ENCODE measurements at regions of chr4 and their contacts with region 1.

Region 1: DNA sequence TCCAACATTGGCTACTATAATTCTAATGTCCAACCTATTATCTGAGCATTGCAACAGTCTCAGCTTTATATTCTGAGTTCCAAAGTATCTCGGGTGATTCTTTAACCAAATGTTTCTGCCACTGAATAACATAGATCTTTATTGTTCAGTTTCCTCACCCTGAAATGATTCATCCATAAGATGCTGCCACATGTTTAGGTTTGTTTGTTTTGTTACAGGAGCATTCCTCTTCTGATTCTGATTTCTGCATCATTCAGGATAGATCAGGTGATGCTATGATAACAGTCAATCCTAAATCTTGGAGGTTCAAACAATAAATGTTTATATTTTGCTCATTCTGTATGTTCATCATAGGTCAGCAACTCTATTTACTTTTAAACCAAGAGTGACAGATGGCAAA is 927.6 kb downstream of the PCDH7 start:
- DNase-seq: no peak
- H3K4me3 ChIP-seq: no peak overlapping the region
- H3K27ac ChIP-seq: no peak overlapping the region
- H3K4me1 ChIP-seq: no peaks in the 10 kb centered on the region
- H3K27me3 ChIP-seq: no peaks in the 10 kb centered on the region
- CTCF ChIP-seq: no peak
- EP300 ChIP-seq: no peak
- POLR2A ChIP-seq: no peak

Region 2: DNA sequence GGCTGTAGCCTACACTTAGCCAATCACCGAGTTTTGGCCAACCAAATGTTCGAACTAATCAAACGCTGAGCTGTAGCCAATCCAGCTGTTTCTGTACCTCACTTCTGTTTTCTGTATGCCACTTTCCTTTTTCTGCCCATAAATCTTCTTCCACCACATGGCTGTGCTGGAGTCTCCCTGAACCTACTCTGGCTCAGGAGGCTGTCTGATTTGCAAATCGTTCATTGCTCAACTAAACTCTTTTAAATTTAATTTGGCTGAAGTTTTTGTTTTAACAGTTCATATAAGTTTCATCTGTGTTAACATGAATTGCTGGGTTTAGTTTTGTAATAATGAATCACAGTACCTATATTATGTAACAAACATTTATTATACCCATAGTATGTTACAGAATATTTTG is 1088.3 kb before region 1 on chr4:
- in situ Hi-C with region 1: no loop called
- intact Hi-C with region 1: loop called (anchors 5 kb)
- DNase-seq: no peak
- H3K4me3 ChIP-seq: no peak overlapping the region
- H3K27ac ChIP-seq: no peak overlapping the region
- H3K4me1 ChIP-seq: no peaks in the 10 kb centered on the region
- H3K27me3 ChIP-seq: no peaks in the 10 kb centered on the region
- CTCF ChIP-seq: no peak
- EP300 ChIP-seq: no peak
- POLR2A ChIP-seq: no peak

Region 3: GRCh38 chr4:31272331-31273061 is 375.3 kb before region 1 on chr4:
- in situ Hi-C with region 1: no loop called
- intact Hi-C with region 1: loop called (anchors 5 kb)
- DNase-seq: no peak
- H3K4me3 ChIP-seq: no peak overlapping the region
- H3K27ac ChIP-seq: no peak overlapping the region
- H3K4me1 ChIP-seq: peaks cover 0 to 15% (median 8%) of the 10 kb centered on the region in 4 donors
- H3K27me3 ChIP-seq: no peaks in the 10 kb centered on the region
- CTCF ChIP-seq: no peak
- EP300 ChIP-seq: no peak
- POLR2A ChIP-seq: no peak

Measured in transverse colon (tissue), 4 donors.